A549 (cell line): ENCODE measurements at regions of chr15 and their contacts with region 1.

Region 1: GRCh38 chr15:85330901-85331588 is 49.4 kb upstream of the AKAP13 start:
- DNase-seq: peak; percentile 93 to 95
- ATAC-seq: peak; percentile 92 to 96
- H3K4me3 ChIP-seq: peak overlapping the region; percentile 44; the same call in 2 of the 3 replicates
- H3K27ac ChIP-seq: peak overlapping the region; percentile 78 to 85
- H3K4me1 ChIP-seq: peaks cover 26% of the 10 kb centered on the region
- CTCF ChIP-seq: peak; percentile 98
- EP300 ChIP-seq: no peak
- POLR2A ChIP-seq: no peak
- RAD21 ChIP-seq: peak; percentile 99 to 100

Region 2: DNA sequence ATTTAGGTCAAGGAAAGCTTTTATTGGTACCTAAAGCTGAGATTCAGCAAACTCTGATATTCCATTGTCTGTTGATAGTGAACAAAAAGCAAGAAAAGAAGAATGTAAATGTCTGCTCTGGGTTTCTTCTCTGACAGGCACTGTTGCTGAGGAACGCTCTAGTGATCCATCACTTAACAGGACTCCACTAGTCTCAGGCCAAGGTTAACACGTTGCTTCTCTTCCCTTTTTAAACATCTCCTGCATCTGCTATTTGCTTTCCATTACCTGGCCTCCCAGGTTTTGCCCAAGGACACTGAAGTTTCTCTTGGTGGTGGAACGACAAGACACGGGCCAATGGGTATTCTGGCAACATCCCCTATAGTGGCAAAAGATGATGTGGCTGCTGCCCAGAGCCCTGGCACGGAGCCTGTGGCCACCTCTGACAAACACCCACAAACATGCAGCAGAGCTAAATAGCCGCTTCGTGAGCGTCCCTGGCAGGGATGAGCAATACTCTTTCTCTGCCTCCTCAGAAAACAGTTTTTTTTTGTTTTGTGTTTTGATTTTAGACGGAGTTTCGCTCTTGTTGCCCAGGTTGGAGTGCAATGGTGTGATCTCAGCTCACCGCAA is 48.4 kb before region 1 on chr15:
- CTCF ChIA-PET with region 1: no interaction called
- POLR2A ChIA-PET with region 1: no interaction called
- DNase-seq: no peak
- ATAC-seq: no peak
- H3K4me3 ChIP-seq: no peak overlapping the region
- H3K27ac ChIP-seq: no peak overlapping the region
- H3K4me1 ChIP-seq: no peaks in the 10 kb centered on the region
- CTCF ChIP-seq: no peak
- EP300 ChIP-seq: no peak
- POLR2A ChIP-seq: no peak
- RAD21 ChIP-seq: no peak

Region 3: DNA sequence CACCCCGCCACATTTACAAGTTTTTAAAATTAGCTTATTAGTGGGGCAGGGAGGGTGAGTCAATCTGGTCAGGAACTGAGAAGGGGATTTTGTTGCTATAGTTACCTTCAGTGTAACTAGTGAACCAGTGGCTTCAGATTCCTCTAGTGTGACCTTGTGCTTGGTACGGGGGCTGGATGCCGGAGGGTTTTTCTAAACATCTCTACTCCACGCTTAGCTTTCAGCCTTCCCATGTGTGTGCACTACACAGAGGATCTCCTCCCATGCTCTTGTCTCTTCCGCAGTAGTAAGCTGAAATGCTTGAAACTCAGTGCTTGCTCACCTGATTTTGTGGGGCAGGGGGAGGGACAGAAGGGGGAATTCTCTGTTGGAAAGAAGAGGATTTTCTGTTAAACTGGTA is 18.6 kb before region 1 on chr15:
- CTCF ChIA-PET with region 1: interaction called, 83 read pairs
- POLR2A ChIA-PET with region 1: no interaction called
- DNase-seq: no peak
- ATAC-seq: peak; percentile 37 to 61; a peak in 4 of 6 replicates
- H3K4me3 ChIP-seq: no peak overlapping the region
- H3K27ac ChIP-seq: peak overlapping the region in 1 of 2 experiments; percentile 7; a peak in 2 of 6 replicates
- H3K4me1 ChIP-seq: peaks cover 19% of the 10 kb centered on the region
- CTCF ChIP-seq: no peak
- EP300 ChIP-seq: no peak
- POLR2A ChIP-seq: no peak
- RAD21 ChIP-seq: no peak

Region 4: GRCh38 chr15:85374831-85375230 is 43.8 kb after region 1 on chr15:
- CTCF ChIA-PET with region 1: interaction called, 27 read pairs
- POLR2A ChIA-PET with region 1: interaction called, 23 read pairs
- DNase-seq: no peak
- ATAC-seq: no peak
- H3K4me3 ChIP-seq: no peak overlapping the region
- H3K27ac ChIP-seq: no peak overlapping the region
- H3K4me1 ChIP-seq: peaks cover 3% of the 10 kb centered on the region; the same call in 1 of the 3 replicates
- CTCF ChIP-seq: no peak
- EP300 ChIP-seq: no peak
- POLR2A ChIP-seq: no peak
- RAD21 ChIP-seq: no peak

Region 5: GRCh38 chr15:85402195-85402881 is 71.3 kb after region 1 on chr15:
- CTCF ChIA-PET with region 1: interaction called, 247 read pairs
- POLR2A ChIA-PET with region 1: no interaction called
- DNase-seq: no peak
- ATAC-seq: no peak
- H3K4me3 ChIP-seq: no peak overlapping the region
- H3K27ac ChIP-seq: 0 out of 6 replicates have a peak overlapping the region, but pooled peaks of 1 of the 2 experiments have one; percentile 1
- H3K4me1 ChIP-seq: peaks cover 59% of the 10 kb centered on the region
- CTCF ChIP-seq: no peak
- EP300 ChIP-seq: no peak
- POLR2A ChIP-seq: no peak
- RAD21 ChIP-seq: no peak

Region 6: GRCh38 chr15:85475317-85475701 is 144.3 kb after region 1 on chr15:
- CTCF ChIA-PET with region 1: interaction called, 18 read pairs
- POLR2A ChIA-PET with region 1: no interaction called
- DNase-seq: no peak
- ATAC-seq: no peak
- H3K4me3 ChIP-seq: no peak overlapping the region
- H3K27ac ChIP-seq: no peak overlapping the region
- H3K4me1 ChIP-seq: peaks cover 67% of the 10 kb centered on the region
- CTCF ChIP-seq: no peak
- EP300 ChIP-seq: no peak
- POLR2A ChIP-seq: no peak
- RAD21 ChIP-seq: no peak

Region 7: GRCh38 chr15:85504749-85505676 is 174.0 kb after region 1 on chr15:
- CTCF ChIA-PET with region 1: interaction called, 56 read pairs
- POLR2A ChIA-PET with region 1: no interaction called
- DNase-seq: peak; percentile 49 to 74
- ATAC-seq: peak; percentile 83 to 89; a peak in 4 of 6 replicates
- H3K4me3 ChIP-seq: no peak overlapping the region
- H3K27ac ChIP-seq: peak overlapping the region in 1 of 2 experiments; percentile 6; a peak in 1 of 6 replicates
- H3K4me1 ChIP-seq: peaks cover 15% of the 10 kb centered on the region; the same call in 2 of the 3 replicates
- CTCF ChIP-seq: peak; percentile 93
- EP300 ChIP-seq: no peak
- POLR2A ChIP-seq: no peak
- RAD21 ChIP-seq: peak; percentile 69 to 74